ENCODE measurements at regions of chr19 and their contacts with region 1.

Region 1: DNA sequence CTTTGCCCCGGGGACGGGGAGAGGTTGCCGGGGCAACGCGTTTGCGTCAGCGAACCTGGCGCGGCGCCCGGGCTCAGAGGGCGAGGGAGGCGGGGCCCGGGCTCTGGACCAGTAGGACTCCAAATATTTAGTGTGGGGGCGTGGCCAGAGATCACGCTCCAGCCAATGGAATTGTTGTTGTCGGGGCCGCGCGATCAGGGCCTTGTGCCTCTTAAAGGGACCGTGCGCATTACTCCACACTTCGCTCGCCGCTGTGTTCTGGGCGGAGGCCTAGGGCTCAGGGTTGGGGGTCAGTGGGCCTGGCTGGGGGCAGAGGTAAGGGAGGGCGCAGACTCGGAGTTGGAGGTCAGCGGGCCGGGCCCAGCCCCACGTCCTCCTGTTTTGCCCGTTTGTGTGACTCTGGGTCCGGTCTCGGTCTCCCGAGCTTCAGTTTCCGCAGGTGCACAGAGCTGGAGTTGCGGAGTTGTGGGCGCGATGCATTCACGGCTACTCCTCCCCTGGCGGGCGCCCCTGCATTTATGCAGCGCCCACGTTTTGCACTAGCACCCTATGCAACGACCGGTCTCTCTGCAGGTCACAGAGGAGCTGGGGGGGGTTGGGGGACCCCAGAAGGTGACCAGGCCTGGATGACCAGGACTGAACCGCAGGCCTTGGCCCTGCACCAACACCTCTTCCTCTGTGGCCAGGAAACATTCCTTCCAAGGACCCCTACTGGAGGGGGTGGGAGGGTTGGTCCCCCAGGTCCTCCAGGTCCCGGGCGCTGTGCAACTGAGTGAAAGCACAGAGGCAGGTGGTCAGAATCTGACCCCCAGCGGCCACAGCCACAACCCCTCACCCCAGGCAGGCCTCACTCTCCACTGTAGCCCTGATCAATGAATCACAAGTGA is 10.7 kb upstream of the MKNK2 start:
- DNase-seq: peak; percentile 99 to 100
- ATAC-seq: peak; percentile 89 to 97 (median 89)
- H3K4me3 ChIP-seq: peak overlapping the region; percentile 59
- H3K4me3 Mint-ChIP-seq: peak overlapping the region; percentile 82
- H3K27ac ChIP-seq: peak overlapping the region; percentile 97
- H3K27ac Mint-ChIP-seq: peak overlapping the region; percentile 98
- H3K4me1 ChIP-seq: peaks cover 45% of the 10 kb centered on the region
- H3K4me1 Mint-ChIP-seq: peaks cover 8 to 30% of the 10 kb centered on the region in 2 donors
- H3K27me3 ChIP-seq: no peaks in the 10 kb centered on the region
- H3K27me3 Mint-ChIP-seq: no peaks in the 10 kb centered on the region
- CTCF ChIP-seq: no peak

Region 2: DNA sequence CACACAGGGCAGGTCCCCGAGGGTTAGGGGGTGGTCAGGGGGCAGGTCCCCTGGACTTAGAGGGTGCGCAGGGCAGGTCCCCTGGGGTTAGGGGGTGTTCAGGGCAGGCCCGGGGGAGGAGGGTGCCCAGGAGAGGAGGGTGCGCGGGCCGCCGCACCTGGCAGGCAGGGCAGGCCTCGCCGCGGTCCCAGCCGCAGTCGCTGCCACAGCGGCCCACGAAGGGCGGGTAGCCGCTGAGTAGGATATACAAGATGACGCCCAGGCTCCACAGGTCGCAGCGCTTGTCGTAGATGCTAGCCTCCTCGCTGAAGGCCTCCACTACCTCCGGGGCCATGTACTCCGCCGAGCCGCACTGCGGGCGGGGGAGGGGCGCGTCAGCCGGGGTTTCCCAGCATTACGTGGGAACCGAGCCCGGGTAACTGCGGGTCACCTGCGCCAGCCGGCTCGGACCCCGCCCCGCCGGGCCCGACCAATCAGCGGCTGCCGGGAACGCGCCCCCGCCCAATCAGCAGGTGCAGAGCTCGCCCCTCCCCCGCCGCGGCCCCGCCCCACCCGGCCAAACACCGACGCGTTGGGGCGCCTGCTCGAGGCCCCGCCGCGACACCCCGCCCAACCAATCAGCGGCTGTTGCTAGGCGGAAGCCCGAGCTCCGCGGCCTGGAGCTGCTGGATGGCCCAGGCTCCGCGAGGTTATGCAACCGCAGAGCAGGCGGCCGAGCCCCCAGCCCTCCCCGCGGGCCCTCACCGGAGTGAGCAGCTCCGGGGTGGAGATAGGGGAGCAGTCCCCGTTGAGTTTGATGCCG is 19.9 kb before region 1 on chr19:
- intact Hi-C with region 1: loop called (anchors 1 kb)
- DNase-seq: peak; percentile 99 to 100
- ATAC-seq: peak; percentile 81 to 95 (median 83)
- H3K4me3 ChIP-seq: peak overlapping the region; percentile 26
- H3K4me3 Mint-ChIP-seq: peak overlapping the region; percentile 83
- H3K27ac ChIP-seq: peak overlapping the region; percentile 97
- H3K27ac Mint-ChIP-seq: peak overlapping the region; percentile 91 to 95
- H3K4me1 ChIP-seq: peaks cover 59% of the 10 kb centered on the region
- H3K4me1 Mint-ChIP-seq: peaks cover 5 to 32% of the 10 kb centered on the region in 2 donors
- H3K27me3 ChIP-seq: no peaks in the 10 kb centered on the region
- H3K27me3 Mint-ChIP-seq: no peaks in the 10 kb centered on the region
- CTCF ChIP-seq: no peak

Region 3: DNA sequence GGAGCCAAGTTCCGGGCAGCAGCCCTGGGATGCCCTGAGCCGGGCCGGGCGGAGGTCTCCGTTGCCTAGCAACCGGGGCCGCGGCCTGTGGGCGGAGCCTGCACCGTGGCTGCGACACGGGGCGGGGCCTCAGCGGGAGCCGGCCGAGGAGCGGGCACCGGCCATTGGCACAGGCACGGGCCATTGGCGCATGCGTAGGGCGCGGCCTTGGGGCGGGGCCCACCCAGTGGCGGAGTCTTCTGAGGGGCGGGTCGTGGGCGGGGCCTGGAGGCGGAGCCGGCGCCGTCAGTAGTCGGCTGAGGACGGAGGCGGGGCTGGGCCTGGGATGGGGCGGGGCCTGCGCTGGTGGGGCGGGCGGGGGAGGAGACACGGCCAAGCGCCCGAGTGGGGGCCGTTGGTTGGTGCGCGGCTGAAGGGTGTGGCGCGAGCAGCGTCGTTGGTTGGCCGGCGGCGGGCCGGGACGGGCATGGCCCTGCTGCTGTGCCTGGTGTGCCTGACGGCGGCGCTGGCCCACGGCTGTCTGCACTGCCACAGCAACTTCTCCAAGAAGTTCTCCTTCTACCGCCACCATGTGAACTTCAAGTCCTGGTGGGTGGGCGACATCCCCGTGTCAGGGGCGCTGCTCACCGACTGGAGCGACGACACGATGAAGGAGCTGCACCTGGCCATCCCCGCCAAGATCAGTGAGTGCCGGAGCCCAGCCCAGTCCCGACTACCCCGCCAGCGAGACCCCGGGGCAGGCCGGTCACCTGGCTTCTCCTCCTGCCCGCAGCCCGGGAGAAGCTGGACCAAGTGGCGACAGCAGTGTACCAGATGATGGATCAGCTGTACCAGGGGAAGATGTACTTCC is 35.0 kb after region 1 on chr19 and contains the start of gene IZUMO4:
- intact Hi-C with region 1: loop called (anchors 5 kb)
- DNase-seq: peak; percentile 99
- ATAC-seq: peak; percentile 80 to 92 (median 83)
- H3K4me3 ChIP-seq: peak within 1 kb of the TSS; percentile 69
- H3K4me3 Mint-ChIP-seq: peak within 1 kb of the TSS; percentile 98
- H3K27ac ChIP-seq: peak within 1 kb of the TSS; percentile 87
- H3K27ac Mint-ChIP-seq: peak within 1 kb of the TSS; percentile 88 to 90
- H3K4me1 ChIP-seq: peaks cover 52% of the 10 kb centered on the region
- H3K4me1 Mint-ChIP-seq: peaks cover 19 to 35% of the 10 kb centered on the region in 2 donors
- H3K27me3 ChIP-seq: no peaks in the 10 kb centered on the region
- H3K27me3 Mint-ChIP-seq: no peaks in the 10 kb centered on the region
- CTCF ChIP-seq: peak; percentile 25
- total RNA-seq, gene IZUMO4: 3.3 to 7.6 (median 7.1) TPM